Activated CD4-positive, alpha-beta memory T cell treated with anti-CD3 and anti-CD28 coated beads, Interleukin-2, amount 10 ng/mL, durations not matched to agents 7 days and 5 days (primary cell): ENCODE measurements at regions of chr10 and their contacts with region 1.

Region 1: DNA sequence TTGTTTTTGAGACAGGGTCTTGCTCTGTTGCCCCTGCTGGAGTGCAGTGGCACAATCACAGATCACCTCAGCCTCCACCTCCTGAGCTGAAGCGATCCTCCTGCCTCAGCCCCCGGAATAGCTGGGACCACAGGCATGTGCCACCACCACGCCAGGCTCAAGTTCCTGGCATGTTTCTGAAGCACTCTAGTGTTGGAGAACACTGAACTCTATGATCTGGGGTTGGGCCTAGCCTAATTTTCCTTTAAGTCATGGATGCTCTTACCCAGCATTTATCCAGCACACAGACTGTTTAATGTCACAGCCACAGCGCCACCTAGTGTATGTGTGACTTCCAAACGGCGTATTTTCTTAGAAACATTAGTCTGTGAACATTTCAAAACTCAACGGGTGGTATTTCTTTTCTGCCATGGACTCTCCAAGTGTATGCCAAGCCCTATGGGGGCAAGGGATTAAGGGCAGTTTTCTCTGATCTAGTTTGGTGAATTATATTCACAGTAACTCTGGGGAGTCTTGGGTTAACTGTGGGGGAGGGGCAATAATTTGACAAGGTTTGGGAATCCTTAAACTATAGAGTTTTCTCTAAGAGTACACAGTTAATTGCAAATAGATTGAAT is 91.8 kb downstream of the CREM start:
- DNase-seq: peak; percentile 88
- H3K4me3 Mint-ChIP-seq: peak overlapping the region; percentile 51
- H3K27ac Mint-ChIP-seq: peak overlapping the region; percentile 76
- H3K4me1 Mint-ChIP-seq: peaks cover 55% of the 10 kb centered on the region
- H3K27me3 Mint-ChIP-seq: no peaks in the 10 kb centered on the region

Region 2: DNA sequence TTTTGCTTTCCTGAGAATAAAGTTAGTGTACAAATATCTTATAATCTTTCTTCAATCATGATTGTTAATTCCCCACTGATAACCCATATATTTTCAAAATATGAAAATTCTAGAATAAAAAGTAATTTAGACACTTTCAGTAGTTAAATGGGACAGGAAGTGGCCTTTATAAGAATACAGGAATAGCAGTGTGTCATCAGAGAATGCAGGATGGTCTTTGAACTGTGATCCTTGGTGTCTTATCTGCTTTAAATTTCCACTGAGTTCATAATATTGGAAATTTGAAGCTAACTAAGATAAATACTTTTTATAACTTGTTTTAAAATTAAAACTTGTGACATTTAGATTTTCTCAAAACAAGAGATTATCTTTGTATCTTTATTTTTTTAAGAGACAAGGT is 16.4 kb before region 1 on chr10:
- CTCF ChIA-PET with region 1: interaction called, 87 read pairs
- POLR2A ChIA-PET with region 1: interaction called, 19 read pairs
- DNase-seq: no peak
- H3K4me3 Mint-ChIP-seq: no peak overlapping the region
- H3K27ac Mint-ChIP-seq: peak overlapping the region; percentile 54
- H3K4me1 Mint-ChIP-seq: peaks cover 67% of the 10 kb centered on the region
- H3K27me3 Mint-ChIP-seq: no peaks in the 10 kb centered on the region